Activated CD8-positive, alpha-beta memory T cell treated with anti-CD3 and anti-CD28 coated beads, Interleukin-2, amount 10 ng/mL, durations not matched to agents 7 days and 5 days (primary cell): ENCODE measurements at regions of chr21 and their contacts with region 1.

Region 1: DNA sequence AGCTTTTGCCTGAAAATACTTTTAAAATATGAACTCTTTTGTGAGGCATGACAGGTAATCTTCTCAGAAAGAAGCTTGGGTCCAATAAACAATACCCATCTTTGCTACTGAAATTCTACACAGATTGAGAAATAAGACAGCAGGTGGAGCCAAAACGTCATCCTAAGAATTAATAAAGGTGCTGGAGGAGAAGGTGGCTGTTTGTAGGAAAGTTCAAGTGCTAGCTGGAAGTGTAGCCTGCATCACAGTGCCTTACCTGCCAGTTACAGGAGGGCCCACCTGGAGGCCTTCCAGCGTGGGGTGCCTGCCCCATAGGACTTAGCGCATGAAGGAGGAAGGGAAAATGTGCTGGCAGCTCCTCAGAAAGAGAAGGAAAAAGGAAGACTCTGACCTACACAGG is 93.7 kb downstream of the TTC3 start:
- DNase-seq: no peak
- ATAC-seq: peak; percentile 51
- H3K4me3 Mint-ChIP-seq: no peak overlapping the region
- H3K27ac Mint-ChIP-seq: no peak overlapping the region
- H3K4me1 Mint-ChIP-seq: peaks cover 12% of the 10 kb centered on the region
- H3K27me3 Mint-ChIP-seq: no peaks in the 10 kb centered on the region

Region 2: GRCh38 chr21:37155186-37155585 is 11.5 kb before region 1 on chr21:
- CTCF ChIA-PET with region 1: interaction called, 10 read pairs
- DNase-seq: no peak
- ATAC-seq: no peak
- H3K4me3 Mint-ChIP-seq: no peak overlapping the region
- H3K27ac Mint-ChIP-seq: no peak overlapping the region
- H3K4me1 Mint-ChIP-seq: peaks cover 20% of the 10 kb centered on the region
- H3K27me3 Mint-ChIP-seq: no peaks in the 10 kb centered on the region